Heart right ventricle (tissue), 16 donors: ENCODE measurements at regions of chr13 and their contacts with region 1.

Region 1: GRCh38 chr13:41716236-41716635 is 244.7 kb downstream of the VWA8 start:
- DNase-seq: no peak
- ATAC-seq: peak in 1 of 8 donors; percentile 65
- H3K4me3 ChIP-seq: no peak overlapping the region
- H3K27ac ChIP-seq: peak overlapping the region in 1 of 10 donors; percentile 23
- H3K4me1 ChIP-seq: peaks cover 0 to 30% (median 6%) of the 10 kb centered on the region in 9 donors
- H3K27me3 ChIP-seq: no peaks in the 10 kb centered on the region
- CTCF ChIP-seq: no peak

Region 2: DNA sequence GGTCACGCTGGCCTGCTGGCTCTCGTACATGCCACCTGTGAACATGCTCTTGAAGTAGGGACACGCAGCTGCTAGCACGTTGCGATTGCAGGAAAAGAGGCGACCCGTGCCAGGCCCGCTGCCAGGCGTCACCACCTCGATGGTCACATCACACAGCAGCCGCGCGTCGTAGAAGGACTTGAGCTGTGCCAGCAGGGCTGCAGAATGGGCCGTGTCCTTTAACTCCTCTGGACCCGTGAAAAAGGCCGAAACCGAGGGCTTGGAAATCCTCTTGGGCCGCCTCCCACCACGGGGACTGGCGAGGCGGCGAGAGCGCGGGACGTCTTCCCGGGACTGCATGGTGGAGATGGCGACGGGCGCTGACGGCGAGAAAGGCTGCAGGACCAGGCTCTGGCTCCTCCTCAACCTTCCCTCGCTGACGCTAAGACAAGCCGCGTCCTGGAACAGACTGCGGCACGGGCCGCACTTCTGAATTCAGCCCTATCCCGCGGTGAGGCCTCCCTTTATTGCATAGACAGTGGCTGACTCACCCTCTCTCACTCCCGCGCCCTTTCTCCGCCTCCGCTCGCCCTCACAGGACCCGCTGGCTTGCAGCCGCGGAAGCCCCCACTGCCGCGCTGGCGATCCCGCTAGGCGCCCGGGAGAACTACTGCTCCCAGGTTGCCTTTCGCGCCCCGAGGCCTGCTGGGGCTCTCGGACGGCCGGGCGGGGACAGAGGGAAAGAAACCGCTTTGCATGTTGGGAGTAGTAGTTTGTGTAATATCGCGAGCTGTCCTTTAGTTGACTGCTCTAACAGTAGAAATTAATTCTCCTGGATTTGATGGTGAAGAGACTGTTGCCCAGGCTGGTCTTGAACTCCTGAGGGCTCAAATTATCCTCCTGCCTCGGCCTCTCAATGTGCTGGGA is 522.1 kb before region 1 on chr13 and contains the start of gene KBTBD7:
- intact Hi-C with region 1: no loop called
- DNase-seq: peak; percentile 94
- ATAC-seq: peak; percentile 99 to 100 (median 99)
- H3K4me3 ChIP-seq: peak within 1 kb of the TSS; percentile 39 to 84 (median 68)
- H3K27ac ChIP-seq: peak within 1 kb of the TSS; percentile 18 to 94 (median 88)
- H3K4me1 ChIP-seq: peaks cover 2 to 29% (median 19%) of the 10 kb centered on the region in 9 donors
- H3K27me3 ChIP-seq: no peaks in the 10 kb centered on the region
- CTCF ChIP-seq: peak in 1 of 9 donors; percentile 10
- total RNA-seq, gene KBTBD7: 4.1 to 7.6 (median 5.6) TPM

Region 3: GRCh38 chr13:41668130-41668757 is 48.0 kb before region 1 on chr13:
- intact Hi-C with region 1: loop called in 1 of 10 experiments (anchors 5 kb)
- DNase-seq: peak in 1 of 2 donors; percentile 74
- ATAC-seq: peak; percentile 91 to 98 (median 96)
- H3K4me3 ChIP-seq: no peak overlapping the region
- H3K27ac ChIP-seq: no peak overlapping the region
- H3K4me1 ChIP-seq: peaks cover 0 to 12% (median 4%) of the 10 kb centered on the region in 9 donors
- H3K27me3 ChIP-seq: no peaks in the 10 kb centered on the region
- CTCF ChIP-seq: peak; percentile 69 to 93 (median 83)

Region 4: GRCh38 chr13:41897126-41897525 is 180.9 kb after region 1 on chr13:
- intact Hi-C with region 1: loop called in 1 of 10 experiments (anchors 5 kb)
- DNase-seq: no peak
- ATAC-seq: no peak
- H3K4me3 ChIP-seq: no peak overlapping the region
- H3K27ac ChIP-seq: no peak overlapping the region
- H3K4me1 ChIP-seq: peaks cover 0 to 7% (median 0%) of the 10 kb centered on the region in 9 donors
- H3K27me3 ChIP-seq: no peaks in the 10 kb centered on the region
- CTCF ChIP-seq: no peak

Region 5: GRCh38 chr13:42001580-42001979 is 285.3 kb after region 1 on chr13:
- intact Hi-C with region 1: no loop called
- DNase-seq: no peak
- ATAC-seq: peak in 1 of 8 donors; percentile 25
- H3K4me3 ChIP-seq: no peak overlapping the region
- H3K27ac ChIP-seq: no peak overlapping the region
- H3K4me1 ChIP-seq: peaks cover 0 to 2% (median 0%) of the 10 kb centered on the region in 9 donors
- H3K27me3 ChIP-seq: no peaks in the 10 kb centered on the region
- CTCF ChIP-seq: no peak